BJ (cell line): ENCODE measurements at regions of chr6 and their contacts with region 1.

Region 1: DNA sequence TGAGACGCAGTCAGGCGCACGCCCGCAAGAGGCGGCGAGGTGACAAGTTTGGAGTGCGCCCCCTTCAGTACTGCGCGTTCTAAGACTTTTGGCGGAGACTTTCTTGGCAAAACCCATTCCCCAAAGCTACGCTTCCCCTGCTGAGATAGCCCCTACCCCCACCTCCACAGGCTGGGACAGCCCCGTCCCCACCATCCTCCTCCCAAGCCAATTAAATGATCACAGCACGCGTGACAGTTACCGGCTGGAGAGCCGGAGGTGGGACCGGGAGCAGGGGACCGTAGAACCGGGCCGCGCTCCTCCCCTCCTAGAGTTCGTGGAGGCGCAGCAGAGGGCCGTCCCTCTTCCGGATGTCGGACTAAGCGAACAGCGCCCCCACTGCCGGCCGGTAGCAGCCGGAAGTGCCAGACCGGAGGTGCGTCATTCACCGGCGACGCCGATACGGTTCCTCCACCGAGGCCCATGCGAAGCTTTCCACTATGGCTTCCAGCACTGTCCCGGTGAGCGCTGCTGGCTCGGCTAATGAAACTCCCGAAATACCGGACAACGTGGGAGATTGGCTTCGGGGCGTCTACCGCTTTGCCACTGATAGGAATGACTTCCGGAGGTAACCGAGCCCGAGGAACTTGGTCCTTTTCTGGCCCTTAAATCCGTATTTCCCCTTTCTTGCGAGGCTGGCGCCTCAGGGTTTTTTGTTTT is at the start of gene TOMM6:
- DNase-seq: peak; percentile 65
- H3K4me3 ChIP-seq: peak within 1 kb of the TSS; percentile 95
- H3K27me3 ChIP-seq: no peaks in the 10 kb centered on the region
- CTCF ChIP-seq: peak; percentile 88
- polyA plus RNA-seq, gene TOMM6: 157 and 199 TPM in 2 replicates

Region 2: DNA sequence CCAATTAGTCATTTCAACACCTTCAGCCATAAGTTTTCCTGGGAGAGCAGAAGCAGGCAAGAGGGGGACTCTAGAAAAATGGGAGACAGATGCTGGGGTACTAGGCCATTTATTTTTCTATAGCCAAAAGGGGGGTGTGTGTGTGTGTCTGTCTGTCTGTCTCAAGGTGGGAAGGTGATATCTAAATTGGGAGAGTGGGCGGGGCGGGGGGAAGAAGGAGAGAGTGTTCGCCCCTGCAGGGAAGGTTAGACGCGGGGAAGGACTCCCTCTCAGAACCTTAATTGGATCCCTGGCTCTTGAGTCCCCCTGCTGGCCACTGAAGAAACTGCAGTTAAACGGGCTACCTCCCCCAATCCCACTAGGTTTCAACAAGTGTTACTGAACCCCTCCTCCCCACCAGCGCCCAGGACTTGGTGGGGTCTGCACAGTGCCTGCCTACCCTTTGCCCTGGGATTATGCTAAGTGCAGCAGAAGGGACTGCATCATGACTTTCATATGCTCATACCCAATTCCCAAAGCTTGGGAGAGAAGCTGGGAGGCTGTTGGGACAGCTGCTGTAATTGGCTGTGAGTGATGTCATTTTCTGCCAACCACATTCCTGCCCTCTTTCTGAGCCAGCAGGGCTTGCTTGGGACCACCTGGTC is 195.4 kb before region 1 on chr6:
- CTCF ChIA-PET with region 1: interaction called, 12 read pairs
- POLR2A ChIA-PET with region 1: no interaction called
- DNase-seq: no peak
- H3K4me3 ChIP-seq: no peak overlapping the region
- H3K27me3 ChIP-seq: no peaks in the 10 kb centered on the region
- CTCF ChIP-seq: peak; percentile 90

Region 3: GRCh38 chr6:41625442-41625841 is 161.9 kb before region 1 on chr6:
- CTCF ChIA-PET with region 1: no interaction called
- POLR2A ChIA-PET with region 1: no interaction called
- DNase-seq: no peak
- H3K4me3 ChIP-seq: no peak overlapping the region
- H3K27me3 ChIP-seq: peaks cover 4% of the 10 kb centered on the region
- CTCF ChIP-seq: no peak

Region 4: DNA sequence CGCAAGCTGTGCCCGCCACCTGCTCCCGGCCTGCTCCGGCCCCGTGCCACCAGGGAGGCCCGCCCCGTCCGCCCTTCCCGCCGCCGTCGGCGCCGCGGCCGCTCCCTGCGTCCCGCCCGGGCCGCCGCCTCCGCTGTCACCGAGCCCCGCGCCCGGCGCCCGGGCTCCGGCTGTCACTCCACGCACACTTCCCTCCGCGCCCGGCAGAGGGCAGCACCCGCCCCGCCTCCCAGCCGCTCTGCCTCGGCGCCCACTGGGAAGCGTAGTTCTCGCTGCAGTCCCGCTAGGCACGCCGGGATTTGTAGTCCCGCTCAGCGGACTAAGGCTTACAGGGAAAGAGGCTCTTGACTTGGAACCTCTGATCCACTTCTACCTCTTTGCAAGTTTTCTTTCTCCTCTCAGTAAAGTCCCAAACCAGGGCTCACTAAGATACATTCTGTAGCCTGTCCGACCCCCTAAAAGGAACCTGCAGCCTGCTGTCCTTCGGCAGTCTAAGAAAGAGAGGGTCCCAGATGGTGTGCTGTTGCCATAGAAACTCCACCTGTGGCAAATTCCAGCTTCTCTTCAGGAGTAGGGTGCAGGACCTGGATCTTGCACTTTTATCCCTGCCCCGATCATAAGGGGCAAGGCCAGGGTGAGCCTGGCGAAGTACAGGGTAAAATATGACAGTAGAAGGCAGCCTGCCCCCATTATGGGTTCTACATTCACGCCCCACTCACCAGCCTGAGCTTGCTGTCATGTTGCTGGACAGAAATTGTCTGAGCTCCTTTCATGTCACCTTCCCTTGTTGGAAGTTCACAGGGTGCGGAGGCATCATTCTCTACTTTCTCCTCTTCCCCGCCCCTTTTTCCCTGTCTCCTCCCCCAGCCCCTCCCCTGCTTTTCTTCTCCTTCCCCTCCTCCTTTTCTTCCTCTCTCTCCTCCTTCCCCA is 51.7 kb before region 1 on chr6 and contains the start of gene TFEB:
- CTCF ChIA-PET with region 1: interaction called, 20 read pairs
- POLR2A ChIA-PET with region 1: no interaction called
- DNase-seq: peak; percentile 36
- H3K4me3 ChIP-seq: peak within 1 kb of the TSS; percentile 85
- H3K27me3 ChIP-seq: no peaks in the 10 kb centered on the region; the same call in 1 of the 2 replicates
- CTCF ChIP-seq: peak; percentile 84
- polyA plus RNA-seq, gene TFEB: 13.2 and 21.9 TPM in 2 replicates

Region 5: GRCh38 chr6:41801380-41801779 is 14.0 kb after region 1 on chr6:
- CTCF ChIA-PET with region 1: interaction called, 27 read pairs
- POLR2A ChIA-PET with region 1: no interaction called
- DNase-seq: no peak
- H3K4me3 ChIP-seq: no peak overlapping the region
- H3K27me3 ChIP-seq: no peaks in the 10 kb centered on the region
- CTCF ChIP-seq: peak; percentile 66

Region 6: GRCh38 chr6:41874741-41875140 is 87.4 kb after region 1 on chr6:
- CTCF ChIA-PET with region 1: no interaction called
- POLR2A ChIA-PET with region 1: no interaction called
- DNase-seq: no peak
- H3K4me3 ChIP-seq: no peak overlapping the region
- H3K27me3 ChIP-seq: no peaks in the 10 kb centered on the region
- CTCF ChIP-seq: no peak

Region 7: GRCh38 chr6:41920921-41921711 is 133.7 kb after region 1 on chr6 and contains the starts of genes BYSL and MED20:
- CTCF ChIA-PET with region 1: interaction called, 26 read pairs
- POLR2A ChIA-PET with region 1: interaction called, 5 read pairs
- DNase-seq: peak; percentile 52
- H3K4me3 ChIP-seq: peak within 1 kb of the TSS; percentile 77
- H3K27me3 ChIP-seq: no peaks in the 10 kb centered on the region
- CTCF ChIP-seq: peak; percentile 98
- polyA plus RNA-seq, gene BYSL: 18.0 and 28.5 TPM in 2 replicates
- polyA plus RNA-seq, gene MED20: 33.0 and 34.4 TPM in 2 replicates

Region 8: DNA sequence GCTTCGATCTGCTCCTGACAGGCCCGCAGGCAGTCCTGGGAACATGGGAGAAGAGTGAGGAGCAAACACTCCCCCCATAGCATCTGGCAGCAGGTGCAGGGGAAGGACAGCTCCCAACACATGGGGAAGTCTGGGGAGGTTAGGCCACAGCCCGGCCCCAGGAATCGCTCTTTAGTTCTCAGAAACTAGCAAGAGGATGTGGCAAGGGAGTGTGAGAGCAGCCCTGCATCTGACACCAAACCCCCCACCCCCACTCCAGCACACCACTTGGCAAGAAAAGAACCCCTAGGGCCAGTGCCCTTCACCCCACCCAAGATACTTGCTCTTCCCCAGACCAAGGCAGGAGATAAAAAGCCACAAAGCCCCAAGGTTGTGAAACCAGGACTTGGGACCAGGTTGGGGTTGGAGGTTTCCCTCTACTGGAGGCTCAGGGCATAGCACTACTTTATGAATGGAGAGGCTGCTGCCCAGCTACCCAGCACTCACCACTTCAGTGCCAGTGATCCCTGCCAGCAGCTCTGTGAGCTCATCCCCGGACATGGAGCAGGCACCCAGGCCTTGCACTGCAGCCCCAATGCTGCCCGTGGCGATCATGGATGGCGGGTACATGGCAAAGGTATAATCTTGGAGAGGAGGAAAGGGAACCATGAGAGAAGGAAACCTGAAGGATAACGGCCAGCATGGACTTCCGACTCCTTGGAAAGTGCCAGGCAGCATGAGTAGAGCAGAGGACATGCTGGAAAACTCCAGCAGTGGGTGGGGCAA is 148.9 kb after region 1 on chr6:
- CTCF ChIA-PET with region 1: interaction called, 21 read pairs
- POLR2A ChIA-PET with region 1: no interaction called
- DNase-seq: peak; percentile 64
- H3K4me3 ChIP-seq: no peak overlapping the region
- H3K27me3 ChIP-seq: no peaks in the 10 kb centered on the region
- CTCF ChIP-seq: peak; percentile 98

Region 9: GRCh38 chr6:42043787-42044475 is 256.6 kb after region 1 on chr6:
- CTCF ChIA-PET with region 1: interaction called, 106 read pairs
- POLR2A ChIA-PET with region 1: no interaction called
- DNase-seq: no peak
- H3K4me3 ChIP-seq: no peak overlapping the region
- H3K27me3 ChIP-seq: peaks cover 8% of the 10 kb centered on the region
- CTCF ChIP-seq: peak; percentile 96

Region 10: DNA sequence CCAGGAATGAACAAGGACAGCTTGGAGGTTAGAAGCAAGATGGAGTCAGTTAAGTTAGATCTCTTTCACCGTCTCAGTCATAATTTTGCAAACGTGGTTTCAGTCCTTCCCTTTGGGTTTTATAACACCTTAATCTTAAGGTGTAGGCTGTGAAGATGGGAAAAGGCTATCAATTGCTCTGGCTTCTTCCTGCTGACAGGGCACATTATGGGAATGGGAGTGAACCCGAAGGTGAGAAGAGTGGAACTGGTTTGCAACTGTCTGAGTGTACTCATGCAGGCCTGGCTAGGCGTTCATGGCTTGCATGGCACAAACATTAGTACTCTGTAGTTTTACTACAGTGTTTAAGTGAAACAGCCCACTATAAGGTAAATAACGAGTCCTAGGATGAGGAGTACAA is 272.4 kb after region 1 on chr6:
- CTCF ChIA-PET with region 1: no interaction called
- POLR2A ChIA-PET with region 1: no interaction called
- DNase-seq: no peak
- H3K4me3 ChIP-seq: no peak overlapping the region
- H3K27me3 ChIP-seq: no peaks in the 10 kb centered on the region
- CTCF ChIP-seq: no peak